Sigmoid colon (tissue), 7 donors: ENCODE measurements at regions of chr5 and their contacts with region 1.

Region 1: GRCh38 chr5:73591102-73591695 is 25.7 kb downstream of the UTP15 start:
- DNase-seq: no peak
- H3K4me3 ChIP-seq: no peak overlapping the region
- H3K27ac ChIP-seq: no peak overlapping the region
- H3K4me1 ChIP-seq: peaks cover 0 to 12% (median 0%) of the 10 kb centered on the region in 4 donors
- H3K27me3 ChIP-seq: no peaks in the 10 kb centered on the region
- CTCF ChIP-seq: peak; percentile 62 to 84 (median 78)
- EP300 ChIP-seq: no peak
- POLR2A ChIP-seq: no peak

Region 2: DNA sequence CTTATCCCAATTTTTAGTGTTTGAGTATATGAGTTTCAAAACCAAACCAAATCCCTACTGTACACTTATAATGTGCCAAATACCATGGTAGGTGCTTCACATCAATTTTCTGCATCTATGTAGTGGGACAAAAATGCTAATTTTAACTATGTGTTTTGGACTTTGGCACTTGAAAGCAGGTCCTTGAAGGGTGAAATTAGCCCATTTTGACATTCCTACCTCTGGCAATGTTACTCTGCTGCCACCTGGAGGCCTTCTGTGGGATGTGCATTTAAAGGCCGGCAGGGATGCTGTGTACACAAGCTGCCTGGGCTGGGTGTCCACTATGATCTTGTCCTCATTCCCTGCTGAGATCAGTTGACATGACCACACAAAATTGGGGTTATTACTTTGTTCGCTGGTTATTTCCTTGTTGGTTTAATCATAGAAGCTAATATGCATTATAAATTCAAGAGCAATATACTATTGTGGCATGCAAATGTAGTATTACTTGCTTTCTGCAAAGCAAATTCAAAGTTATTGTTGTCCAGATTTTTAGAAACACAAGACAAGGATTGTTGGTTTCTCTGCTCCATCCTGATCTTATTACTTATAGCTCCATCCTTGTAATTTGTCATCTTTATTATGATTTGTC is 201.6 kb after region 1 on chr5:
- intact Hi-C with region 1: loop called (anchors 1 kb)
- DNase-seq: peak; percentile 73
- H3K4me3 ChIP-seq: no peak overlapping the region
- H3K27ac ChIP-seq: no peak overlapping the region
- H3K4me1 ChIP-seq: peaks cover 0 to 7% (median 0%) of the 10 kb centered on the region in 4 donors
- H3K27me3 ChIP-seq: no peaks in the 10 kb centered on the region
- CTCF ChIP-seq: peak; percentile 75 to 94 (median 93)
- EP300 ChIP-seq: no peak
- POLR2A ChIP-seq: no peak